T-cell (primary cell): ENCODE measurements at regions of chr12 and their contacts with region 1.

Region 1: GRCh38 chr12:52278541-52279421 is 4.3 kb downstream of the KRT86 start:
- DNase-seq: peak in 34 of 35 experiments; percentile 18 to 77 (median 55)
- ATAC-seq: peak; percentile 85 to 89 (median 88)
- H3K4me3 ChIP-seq: no peak overlapping the region
- H3K4me3 Mint-ChIP-seq: peak overlapping the region in 2 of 3 donors; percentile 25 to 34
- H3K27ac ChIP-seq: no peak overlapping the region
- H3K27ac Mint-ChIP-seq: no peak overlapping the region
- H3K4me1 ChIP-seq: peaks cover 0 to 9% of the 10 kb centered on the region in 2 experiments
- H3K4me1 Mint-ChIP-seq: peaks cover 5 to 10% (median 7%) of the 10 kb centered on the region in 3 donors
- H3K27me3 ChIP-seq: peaks cover 0 to 41% of the 10 kb centered on the region in 2 experiments
- H3K27me3 Mint-ChIP-seq: peaks cover 28 to 45% of the 10 kb centered on the region in 2 donors

Region 2: DNA sequence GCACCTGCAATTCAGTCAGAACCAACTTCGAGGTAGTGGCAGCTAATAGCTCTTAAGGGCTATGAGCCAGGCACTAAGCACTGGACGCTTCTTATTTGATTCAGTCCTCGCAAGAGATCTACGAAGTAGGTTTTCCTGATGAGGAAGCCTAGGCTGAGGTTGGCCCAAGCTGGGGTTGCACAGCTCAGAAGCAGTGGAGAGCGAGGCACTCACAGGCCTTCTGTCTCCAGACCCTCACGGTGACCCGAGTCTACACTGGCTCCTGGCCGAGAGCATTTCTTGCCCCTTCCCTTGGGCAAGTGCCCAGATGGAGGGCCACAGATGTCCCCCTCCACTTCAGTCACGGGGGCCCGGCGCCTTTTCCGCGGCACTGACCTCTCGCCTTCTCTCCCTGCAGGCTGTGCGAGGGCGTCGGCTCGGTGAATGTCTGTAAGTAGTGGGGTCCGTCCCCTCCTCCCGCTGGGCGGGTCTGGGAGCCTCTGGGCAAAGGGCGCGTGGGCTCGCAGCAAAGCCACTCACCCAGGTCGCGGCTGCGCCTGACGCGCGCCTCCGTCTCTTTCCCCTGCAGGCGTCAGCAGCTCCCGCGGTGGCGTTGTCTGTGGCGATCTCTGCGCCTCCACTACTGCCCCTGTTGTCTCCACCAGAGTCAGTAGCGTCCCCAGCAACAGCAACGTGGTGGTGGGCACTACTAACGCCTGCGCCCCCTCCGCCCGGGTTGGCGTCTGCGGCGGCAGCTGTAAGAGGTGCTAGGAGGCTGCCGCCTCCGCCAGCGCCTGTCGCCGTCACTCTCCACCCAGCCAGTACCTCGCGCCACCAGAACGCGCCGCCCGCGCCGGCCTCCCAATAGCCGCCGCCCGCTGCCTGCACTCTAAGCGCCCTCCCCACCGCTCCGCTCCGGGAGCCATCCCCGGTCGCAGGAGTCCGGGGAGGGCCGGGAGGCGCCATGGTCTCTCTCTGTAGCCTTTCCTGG is 29.3 kb after region 1 on chr12:
- CTCF ChIA-PET with region 1: interaction called, 3 to 13 read pairs
- POLR2A ChIA-PET with region 1: no interaction called
- DNase-seq: peak in 23 of 35 experiments; percentile 8 to 55 (median 24)
- ATAC-seq: peak; percentile 56 to 81 (median 62)
- H3K4me3 ChIP-seq: no peak overlapping the region
- H3K4me3 Mint-ChIP-seq: peak overlapping the region; percentile 28 to 57 (median 55)
- H3K27ac ChIP-seq: no peak overlapping the region
- H3K27ac Mint-ChIP-seq: peak overlapping the region in 1 of 2 donors; percentile 74
- H3K4me1 ChIP-seq: peaks cover 0 to 23% of the 10 kb centered on the region in 2 experiments
- H3K4me1 Mint-ChIP-seq: peaks cover 18 to 29% (median 24%) of the 10 kb centered on the region in 3 donors
- H3K27me3 ChIP-seq: peaks cover 9 to 58% of the 10 kb centered on the region in 2 experiments
- H3K27me3 Mint-ChIP-seq: peaks cover 59 to 62% of the 10 kb centered on the region in 2 donors

Region 3: DNA sequence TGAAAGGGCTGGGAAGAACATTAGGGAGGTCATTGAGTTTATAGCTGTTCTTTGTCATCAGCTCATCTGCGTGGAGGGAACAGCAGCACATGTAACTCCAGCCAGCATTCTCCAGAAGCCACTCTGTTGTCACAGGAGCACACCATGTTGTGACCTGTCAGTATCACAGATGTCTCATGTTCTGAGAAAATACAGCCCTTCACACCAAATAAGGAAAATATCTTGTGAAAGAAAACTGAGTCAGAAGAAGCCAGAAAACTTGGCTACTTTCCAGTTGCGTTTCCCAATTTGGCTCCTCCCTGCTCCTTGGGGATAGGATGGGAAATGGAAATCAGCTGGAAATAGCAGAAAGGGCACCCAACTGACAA is 137.6 kb after region 1 on chr12:
- CTCF ChIA-PET with region 1: no interaction called
- POLR2A ChIA-PET with region 1: no interaction called
- DNase-seq: no peak
- ATAC-seq: no peak
- H3K4me3 ChIP-seq: no peak overlapping the region
- H3K4me3 Mint-ChIP-seq: no peak overlapping the region
- H3K27ac ChIP-seq: no peak overlapping the region
- H3K27ac Mint-ChIP-seq: no peak overlapping the region
- H3K4me1 ChIP-seq: no peaks in the 10 kb centered on the region
- H3K4me1 Mint-ChIP-seq: no peaks in the 10 kb centered on the region
- H3K27me3 ChIP-seq: peaks cover 0 to 22% of the 10 kb centered on the region in 2 experiments
- H3K27me3 Mint-ChIP-seq: peaks cover 3 to 12% of the 10 kb centered on the region in 2 donors

Region 4: DNA sequence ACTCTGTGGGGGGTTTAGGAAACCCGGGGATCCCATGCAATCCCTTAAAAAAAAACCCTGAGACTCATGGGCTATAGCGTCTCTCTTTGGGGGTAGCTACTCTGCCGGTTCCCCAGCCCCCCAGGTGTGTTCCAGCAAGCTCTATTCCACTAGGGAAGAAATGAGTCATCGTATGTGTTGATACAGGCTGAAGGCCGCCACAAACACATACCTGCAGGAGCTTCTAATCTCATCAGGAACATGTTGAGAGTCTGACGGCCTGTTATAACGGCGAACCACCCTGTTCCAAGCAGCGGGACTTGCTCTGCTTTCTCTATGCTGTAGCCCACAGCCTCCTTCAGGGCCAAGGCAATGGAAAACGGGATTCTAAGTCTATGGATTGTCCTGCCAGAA is 242.4 kb after region 1 on chr12:
- CTCF ChIA-PET with region 1: no interaction called
- POLR2A ChIA-PET with region 1: no interaction called
- DNase-seq: no peak
- ATAC-seq: no peak
- H3K4me3 ChIP-seq: no peak overlapping the region
- H3K4me3 Mint-ChIP-seq: no peak overlapping the region
- H3K27ac ChIP-seq: no peak overlapping the region
- H3K27ac Mint-ChIP-seq: no peak overlapping the region
- H3K4me1 ChIP-seq: peaks cover 0 to 7% of the 10 kb centered on the region in 2 experiments
- H3K4me1 Mint-ChIP-seq: no peaks in the 10 kb centered on the region
- H3K27me3 ChIP-seq: peaks cover 0 to 19% of the 10 kb centered on the region in 2 experiments
- H3K27me3 Mint-ChIP-seq: peaks cover 1 to 4% of the 10 kb centered on the region in 2 donors